GM12878 (cell line): ENCODE measurements at regions of chr17 and their contacts with region 1.

Region 1: GRCh38 chr17:48830840-48831548 is at the start of gene CALCOCO2:
- DNase-seq: peak; percentile 74
- ATAC-seq: peak; percentile 89
- H3K4me3 ChIP-seq: peak within 1 kb of the TSS; percentile 73
- H3K27ac ChIP-seq: peak within 1 kb of the TSS; percentile 85
- H3K4me1 ChIP-seq: peaks cover 20% of the 10 kb centered on the region
- H3K27me3 ChIP-seq: no peaks in the 10 kb centered on the region
- CTCF ChIP-seq: 0 out of 6 replicates have a peak, but pooled peaks of 1 of the 3 experiments have one; percentile 7
- EP300 ChIP-seq: no peak
- POLR2A ChIP-seq: peak; percentile 88
- RAD21 ChIP-seq: no peak
- polyA plus RNA-seq, gene CALCOCO2: 33.7 to 36.4 TPM

Region 2: DNA sequence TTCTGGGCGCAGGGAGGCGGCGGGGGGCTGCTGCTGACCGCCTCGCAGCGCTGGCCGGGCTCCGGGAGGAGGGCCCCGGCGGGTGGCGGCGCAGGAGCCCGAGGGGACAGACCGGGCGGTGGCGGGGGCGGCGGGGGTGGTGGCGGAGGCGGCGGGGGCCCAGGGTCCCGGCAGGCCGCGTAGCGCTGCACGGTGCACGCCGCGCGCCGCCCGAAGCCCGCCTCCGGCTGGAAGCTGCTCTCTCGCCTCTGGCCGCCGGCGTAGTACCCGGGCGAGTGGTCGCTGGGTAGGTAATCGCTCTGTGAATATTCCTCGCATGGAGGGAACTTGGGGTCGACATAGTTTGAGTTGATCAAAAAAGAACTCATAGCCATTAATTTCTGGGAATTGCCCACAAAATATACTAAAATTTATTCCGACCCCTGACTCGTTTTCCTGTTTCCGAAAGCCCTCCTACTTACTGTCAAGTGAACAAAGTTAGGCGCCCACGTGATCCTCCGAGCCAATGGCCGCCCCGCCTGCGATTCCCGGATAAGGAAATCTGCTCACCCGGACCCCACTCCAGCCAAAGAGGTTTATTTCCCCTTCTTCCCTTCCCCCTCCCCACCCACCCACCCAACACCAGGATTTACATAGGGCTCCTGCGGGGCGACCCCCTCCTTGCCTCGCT is 252.9 kb before region 1 on chr17 and contains the start of gene HOXB4:
- CTCF ChIA-PET with region 1: no interaction called
- POLR2A ChIA-PET with region 1: no interaction called
- RAD21 ChIA-PET with region 1: no interaction called
- SMC1A ChIA-PET with region 1: no interaction called
- in situ Hi-C with region 1: no loop called
- intact Hi-C with region 1: no loop called
- DNase-seq: peak; percentile 43
- ATAC-seq: peak; percentile 80
- H3K4me3 ChIP-seq: peak within 1 kb of the TSS; percentile 93
- H3K27ac ChIP-seq: peak within 1 kb of the TSS; percentile 57
- H3K4me1 ChIP-seq: peaks cover 23% of the 10 kb centered on the region
- H3K27me3 ChIP-seq: no peaks in the 10 kb centered on the region
- CTCF ChIP-seq: no peak
- EP300 ChIP-seq: no peak
- POLR2A ChIP-seq: peak; percentile 62
- RAD21 ChIP-seq: no peak
- polyA plus RNA-seq, gene HOXB4: 0.35 to 0.60 TPM

Region 3: DNA sequence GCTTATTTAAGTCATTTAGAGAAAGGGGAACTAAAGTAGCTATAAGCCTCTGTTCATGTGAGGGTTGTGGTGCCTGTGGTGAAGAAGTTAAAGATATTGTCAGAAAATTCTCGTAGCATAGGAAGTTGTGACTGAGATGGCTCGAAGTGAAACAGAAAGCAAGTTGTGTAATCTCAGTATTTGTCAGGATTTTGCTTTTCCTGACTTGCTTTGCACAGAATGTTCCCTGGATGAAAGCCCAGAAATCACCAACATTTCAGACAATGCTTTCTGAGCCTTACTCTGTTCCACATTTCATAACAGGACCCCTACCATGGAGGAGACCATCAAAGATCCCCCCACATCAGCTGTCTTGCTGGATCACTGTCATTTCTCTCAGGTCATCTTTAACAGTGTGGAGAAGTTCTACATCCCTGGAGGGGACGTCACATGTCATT is 10.4 kb after region 1 on chr17:
- CTCF ChIA-PET with region 1: interaction called, 5 read pairs
- POLR2A ChIA-PET with region 1: interaction called, 9 read pairs
- RAD21 ChIA-PET with region 1: interaction called, 11 read pairs
- SMC1A ChIA-PET with region 1: interaction called, 29 read pairs
- in situ Hi-C with region 1: no loop called
- intact Hi-C with region 1: no loop called
- DNase-seq: peak; percentile 83
- ATAC-seq: peak; percentile 91
- H3K4me3 ChIP-seq: peak overlapping the region; percentile 60
- H3K27ac ChIP-seq: peak overlapping the region; percentile 71
- H3K4me1 ChIP-seq: peaks cover 33% of the 10 kb centered on the region
- H3K27me3 ChIP-seq: no peaks in the 10 kb centered on the region
- CTCF ChIP-seq: no peak
- EP300 ChIP-seq: peak in 1 of 2 experiments; percentile 77; a peak in 1 of 4 replicates
- POLR2A ChIP-seq: no peak
- RAD21 ChIP-seq: no peak

Region 4: DNA sequence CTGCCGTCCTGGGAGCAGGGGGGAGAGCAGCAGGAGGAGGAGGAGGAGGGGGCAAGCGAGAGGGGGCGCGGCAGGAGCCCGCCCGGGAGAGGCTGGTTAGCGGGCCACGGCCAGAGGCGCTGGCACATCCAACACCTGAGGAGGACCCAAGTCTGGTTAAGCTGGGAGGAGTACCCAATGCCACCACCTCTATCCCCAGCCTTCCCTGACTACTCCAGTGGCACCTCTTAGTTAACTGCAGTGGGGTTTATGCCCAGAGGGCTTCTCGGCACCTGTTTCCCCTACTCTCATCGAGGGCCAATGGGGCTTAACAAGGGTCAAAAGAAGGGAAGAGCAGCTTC is 394.0 kb after region 1 on chr17:
- CTCF ChIA-PET with region 1: no interaction called
- POLR2A ChIA-PET with region 1: no interaction called
- RAD21 ChIA-PET with region 1: no interaction called
- SMC1A ChIA-PET with region 1: no interaction called
- in situ Hi-C with region 1: no loop called
- intact Hi-C with region 1: no loop called
- DNase-seq: no peak
- ATAC-seq: no peak
- H3K4me3 ChIP-seq: no peak overlapping the region
- H3K27ac ChIP-seq: no peak overlapping the region
- H3K4me1 ChIP-seq: peaks cover 28% of the 10 kb centered on the region
- H3K27me3 ChIP-seq: no peaks in the 10 kb centered on the region
- CTCF ChIP-seq: no peak
- EP300 ChIP-seq: no peak
- POLR2A ChIP-seq: no peak
- RAD21 ChIP-seq: no peak